ENCODE measurements at regions of chr12 and their contacts with region 1.

Region 1: GRCh38 chr12:117874842-117875434 is 93.9 kb downstream of the KSR2 start:
- DNase-seq: no peak
- H3K4me3 ChIP-seq: no peak overlapping the region
- H3K27ac ChIP-seq: no peak overlapping the region
- H3K4me1 ChIP-seq: peaks cover 0 to 9% (median 7%) of the 10 kb centered on the region in 4 donors
- H3K27me3 ChIP-seq: peaks cover 0 to 36% (median 0%) of the 10 kb centered on the region in 4 donors
- CTCF ChIP-seq: peak; percentile 81 to 96 (median 83)
- EP300 ChIP-seq: no peak
- POLR2A ChIP-seq: no peak

Region 2: DNA sequence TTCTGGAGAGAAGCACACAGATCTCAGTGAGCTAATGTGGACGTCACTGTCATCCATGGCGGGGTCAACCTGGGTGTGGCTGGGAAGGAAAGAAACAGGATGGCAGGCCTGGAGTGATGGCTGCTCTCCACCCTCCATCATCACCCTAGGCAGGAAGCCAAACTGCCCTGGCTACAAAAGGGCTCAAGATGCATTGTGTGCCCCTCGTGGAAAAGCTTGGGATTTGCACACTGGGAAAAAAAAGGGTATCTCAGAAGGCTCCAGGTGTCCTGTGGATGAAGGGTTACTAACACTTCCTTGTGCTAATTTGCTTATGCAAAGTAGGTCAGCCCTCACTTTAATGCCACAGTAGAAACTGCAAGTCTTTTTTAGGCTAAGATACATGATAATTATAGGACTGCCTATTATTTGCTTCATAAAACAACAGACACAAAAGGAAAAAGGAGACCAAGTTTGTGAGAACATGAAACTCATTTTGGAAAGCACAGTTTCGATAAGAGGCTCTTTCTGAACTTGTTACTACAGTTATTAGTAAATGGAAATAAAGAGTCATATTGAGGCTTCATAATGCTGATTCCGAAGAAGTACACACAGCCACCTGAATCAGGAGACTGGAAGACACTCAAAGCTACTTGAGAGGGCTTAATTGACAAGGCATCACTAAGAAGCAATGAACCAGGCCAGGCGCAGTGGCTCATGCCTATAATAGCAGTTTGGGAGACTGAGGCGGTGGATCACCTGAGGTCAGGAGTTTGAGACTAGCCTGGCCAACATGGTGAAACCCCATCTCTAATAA is 160.5 kb after region 1 on chr12:
- intact Hi-C with region 1: loop called (anchors 10 kb)
- DNase-seq: no peak
- H3K4me3 ChIP-seq: no peak overlapping the region
- H3K27ac ChIP-seq: peak overlapping the region in 1 of 4 donors; percentile 26
- H3K4me1 ChIP-seq: peaks cover 0 to 8% (median 6%) of the 10 kb centered on the region in 4 donors
- H3K27me3 ChIP-seq: no peaks in the 10 kb centered on the region
- CTCF ChIP-seq: no peak
- EP300 ChIP-seq: no peak
- POLR2A ChIP-seq: no peak

Measured in esophagus muscularis mucosa (tissue), 4 donors.